Psoas muscle (tissue), 8 donors: ENCODE measurements at regions of chr19 and their contacts with region 1.

Region 1: GRCh38 chr19:45331423-45331822 is 8.7 kb upstream of the CKM start:
- DNase-seq: no peak
- ATAC-seq: no peak
- H3K4me3 ChIP-seq: no peak overlapping the region
- H3K27ac ChIP-seq: no peak overlapping the region
- H3K4me1 ChIP-seq: peaks cover 11% of the 10 kb centered on the region
- H3K27me3 ChIP-seq: no peaks in the 10 kb centered on the region
- CTCF ChIP-seq: no peak

Region 2: DNA sequence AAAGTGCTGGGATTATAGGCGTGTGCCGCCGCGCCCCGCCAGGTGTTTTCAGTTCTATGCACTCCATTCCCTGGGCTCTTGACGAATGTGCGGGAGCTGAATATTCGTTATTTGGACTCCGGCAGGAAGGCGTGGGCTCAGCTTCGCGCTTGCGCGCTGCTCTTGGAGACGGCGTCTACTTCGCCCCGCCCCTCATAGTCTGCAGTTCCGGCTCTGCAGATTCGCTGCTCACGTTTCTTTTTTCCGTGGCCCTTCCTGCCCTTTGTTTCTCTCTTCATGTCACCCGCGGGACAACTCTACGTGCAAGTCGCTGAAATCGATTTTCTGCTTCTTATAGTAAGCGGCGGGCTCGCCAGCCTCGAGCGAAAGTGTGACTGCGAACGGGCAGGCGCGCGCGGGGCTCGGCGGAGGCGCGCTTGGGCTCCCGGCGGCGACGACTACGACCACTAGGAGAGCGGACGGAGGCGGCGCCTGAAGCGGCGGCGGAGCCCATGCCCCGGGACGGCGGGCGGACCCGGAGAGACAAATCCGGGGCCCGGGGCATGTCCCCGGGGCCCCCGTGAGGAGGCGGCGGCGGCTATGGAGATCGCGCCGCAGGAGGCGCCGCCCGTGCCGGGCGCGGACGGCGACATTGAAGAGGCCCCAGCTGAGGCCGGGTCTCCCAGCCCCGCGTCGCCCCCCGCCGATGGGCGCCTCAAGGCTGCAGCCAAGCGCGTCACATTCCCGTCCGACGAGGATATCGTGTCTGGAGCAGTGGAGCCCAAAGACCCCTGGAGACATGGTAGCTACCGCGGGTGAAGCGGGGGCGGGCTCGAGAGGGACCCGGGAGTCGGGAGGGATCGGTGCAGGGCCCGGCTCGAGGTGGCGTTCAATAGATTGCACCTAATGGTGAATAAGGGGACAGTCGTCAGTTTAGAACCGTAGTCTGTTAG is 238.4 kb before region 1 on chr19 and contains the start of gene PPP1R37:
- intact Hi-C with region 1: loop called in 1 of 2 experiments (anchors 10 kb)
- DNase-seq: peak; percentile 94 to 98
- ATAC-seq: peak; percentile 90 to 92 (median 90)
- H3K4me3 ChIP-seq: peak within 1 kb of the TSS; percentile 100
- H3K27ac ChIP-seq: peak within 1 kb of the TSS; percentile 95
- H3K4me1 ChIP-seq: peaks cover 49% of the 10 kb centered on the region
- H3K27me3 ChIP-seq: no peaks in the 10 kb centered on the region
- CTCF ChIP-seq: peak; percentile 35
- total RNA-seq, gene PPP1R37: 27.0 to 34.6 (median 29.1) TPM

Region 3: DNA sequence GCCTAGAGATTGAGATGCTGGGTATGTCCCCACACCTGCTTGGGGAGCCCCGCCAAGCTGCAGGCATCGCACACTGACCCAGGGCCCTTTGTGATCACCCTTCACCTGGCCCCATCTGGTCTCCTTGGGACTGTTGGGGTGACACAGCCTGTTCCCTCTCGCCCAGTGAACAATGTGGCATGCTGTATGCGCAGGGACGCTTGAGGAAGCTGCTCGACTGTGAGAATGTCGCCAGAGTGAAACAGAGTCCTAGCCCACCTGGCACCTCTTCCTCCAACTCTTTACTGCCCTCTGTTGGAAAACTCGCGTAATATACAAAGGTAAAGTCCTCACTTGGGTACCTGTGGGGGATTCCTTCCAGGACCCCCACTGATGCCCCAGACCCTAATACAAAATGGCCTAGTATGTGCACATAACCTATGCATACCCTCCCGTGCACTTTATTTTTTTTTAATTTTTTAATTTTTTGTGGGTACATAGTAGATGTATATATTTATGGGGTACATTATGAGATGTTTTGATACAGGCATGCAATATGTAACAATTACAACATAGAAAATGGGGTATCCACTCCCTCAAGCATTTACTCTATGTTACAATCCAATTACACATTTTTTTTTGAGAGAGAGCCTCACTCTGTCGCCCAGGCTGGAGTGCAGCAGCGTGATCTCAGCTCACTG is 143.9 kb before region 1 on chr19:
- intact Hi-C with region 1: loop called in 1 of 2 experiments (anchors 10 kb)
- DNase-seq: no peak
- ATAC-seq: peak in 3 of 4 donors; percentile 30 to 61 (median 60)
- H3K4me3 ChIP-seq: no peak overlapping the region
- H3K27ac ChIP-seq: no peak overlapping the region
- H3K4me1 ChIP-seq: no peaks in the 10 kb centered on the region
- H3K27me3 ChIP-seq: no peaks in the 10 kb centered on the region
- CTCF ChIP-seq: peak; percentile 52

Region 4: DNA sequence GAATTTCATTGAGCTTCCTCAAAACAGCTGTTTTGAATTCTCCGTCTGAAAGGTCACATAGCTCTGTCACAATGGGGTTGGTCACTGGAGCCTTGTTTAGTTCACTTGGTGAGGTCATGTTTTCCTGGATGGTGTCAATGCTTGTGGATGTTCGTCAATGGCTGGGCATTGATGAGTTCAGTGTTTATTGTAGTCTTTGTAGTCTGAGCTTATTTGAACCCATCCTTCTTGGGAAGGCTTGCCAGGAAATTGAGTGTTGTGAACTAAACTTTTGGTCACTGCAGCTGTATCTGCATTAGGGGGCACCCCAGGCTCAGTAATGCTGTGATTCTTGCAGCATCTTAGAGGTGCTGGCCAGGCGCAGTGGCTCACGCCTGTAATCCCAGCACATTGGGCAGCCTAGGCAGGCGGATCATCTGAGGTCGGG is 130.8 kb before region 1 on chr19:
- intact Hi-C with region 1: loop called in 1 of 2 experiments (anchors 10 kb)
- DNase-seq: no peak
- ATAC-seq: peak in 1 of 4 donors; percentile 60
- H3K4me3 ChIP-seq: no peak overlapping the region
- H3K27ac ChIP-seq: no peak overlapping the region
- H3K4me1 ChIP-seq: no peaks in the 10 kb centered on the region
- H3K27me3 ChIP-seq: peaks cover 0 to 1% (median 0%) of the 10 kb centered on the region in 3 donors
- CTCF ChIP-seq: peak; percentile 38

Region 5: DNA sequence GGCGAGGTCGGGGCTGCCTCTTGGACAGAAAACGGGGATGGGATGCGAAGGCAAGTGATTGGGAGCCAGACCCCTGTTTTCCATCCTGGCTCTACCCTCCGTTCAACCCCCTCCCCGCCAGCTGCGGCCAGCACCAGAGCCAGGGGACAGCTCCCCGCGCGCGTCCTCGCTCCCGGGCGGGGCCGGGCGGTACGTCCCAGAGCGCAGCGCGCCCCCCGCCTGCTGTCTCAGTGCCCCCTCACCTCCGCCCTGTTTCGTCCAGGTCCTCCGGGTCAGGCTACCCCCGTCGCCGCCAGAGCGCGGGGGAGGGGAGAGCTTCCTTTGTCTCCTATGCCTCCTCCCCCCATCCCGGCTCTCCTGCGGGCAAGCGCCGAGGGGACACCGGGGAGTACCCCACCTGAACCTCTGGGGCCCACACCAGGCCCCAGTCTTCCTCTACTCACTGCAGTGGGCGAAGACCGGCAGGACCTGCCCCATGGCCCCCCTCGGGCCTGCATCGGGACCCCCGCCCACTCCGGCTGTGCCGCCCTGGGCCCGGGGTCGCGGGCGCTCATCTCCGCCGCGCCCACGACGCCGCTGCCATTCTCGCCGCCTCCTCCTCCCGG is 165.0 kb after region 1 on chr19:
- intact Hi-C with region 1: loop called (anchors 5 to 10 kb)
- DNase-seq: peak; percentile 49 to 74
- ATAC-seq: peak in 1 of 4 donors; percentile 9
- H3K4me3 ChIP-seq: peak overlapping the region; percentile 79
- H3K27ac ChIP-seq: no peak overlapping the region
- H3K4me1 ChIP-seq: peaks cover 21% of the 10 kb centered on the region
- H3K27me3 ChIP-seq: peaks cover 0 to 40% (median 2%) of the 10 kb centered on the region in 3 donors
- CTCF ChIP-seq: no peak